ENCODE measurements at regions of chr14 and their contacts with region 1.

Region 1: GRCh38 chr14:34322940-34323418 is 139.1 kb downstream of the SPTSSA start:
- DNase-seq: no peak
- H3K4me3 ChIP-seq: no peak overlapping the region
- CTCF ChIP-seq: peak; percentile 79

Region 2: DNA sequence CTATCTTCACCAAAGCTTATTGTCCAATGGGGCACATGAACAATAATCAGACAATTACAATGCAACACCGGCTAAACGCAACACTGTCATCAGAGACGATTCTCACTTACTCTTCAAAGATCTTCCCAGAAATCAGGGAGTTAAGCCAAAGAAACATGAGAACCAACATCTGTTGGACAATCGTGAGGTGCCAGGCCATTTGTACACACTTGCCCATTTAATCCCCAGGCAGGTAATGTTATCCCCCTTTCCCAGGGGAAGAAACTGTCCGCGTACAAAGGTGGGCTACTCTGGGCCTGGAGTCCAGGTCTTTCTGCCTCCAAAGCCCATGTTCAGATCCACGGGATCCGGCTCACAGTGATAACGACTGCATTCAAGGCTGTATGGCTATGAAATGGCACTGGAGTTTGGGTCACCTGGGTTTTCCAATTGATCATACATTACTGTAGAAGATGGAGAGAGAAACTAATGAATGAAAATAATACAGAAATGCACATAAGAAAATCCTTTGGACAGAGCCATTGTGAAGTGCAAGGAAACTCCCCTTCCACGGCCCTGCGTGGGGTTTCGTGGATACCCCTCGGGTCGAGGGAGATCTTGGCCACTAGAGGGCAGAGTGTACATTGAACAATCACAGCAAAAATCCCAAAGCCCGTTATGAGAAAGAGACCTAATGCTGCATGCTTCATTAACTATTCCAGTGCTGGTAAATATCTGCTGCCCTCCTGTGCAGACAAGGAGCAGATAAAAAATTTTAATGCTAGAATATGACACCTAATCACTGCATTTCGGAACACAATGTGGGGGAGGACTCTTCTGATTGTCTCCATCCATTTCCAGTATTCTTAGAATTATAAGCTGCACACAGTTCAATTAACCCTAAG is 483.5 kb before region 1 on chr14:
- CTCF ChIA-PET with region 1: interaction called, 10 read pairs
- POLR2A ChIA-PET with region 1: no interaction called
- DNase-seq: no peak
- H3K4me3 ChIP-seq: no peak overlapping the region
- CTCF ChIP-seq: peak; percentile 70

Region 3: GRCh38 chr14:34030864-34031263 is 292.1 kb before region 1 on chr14:
- CTCF ChIA-PET with region 1: no interaction called
- POLR2A ChIA-PET with region 1: no interaction called
- DNase-seq: no peak
- H3K4me3 ChIP-seq: no peak overlapping the region
- CTCF ChIP-seq: no peak

Region 4: DNA sequence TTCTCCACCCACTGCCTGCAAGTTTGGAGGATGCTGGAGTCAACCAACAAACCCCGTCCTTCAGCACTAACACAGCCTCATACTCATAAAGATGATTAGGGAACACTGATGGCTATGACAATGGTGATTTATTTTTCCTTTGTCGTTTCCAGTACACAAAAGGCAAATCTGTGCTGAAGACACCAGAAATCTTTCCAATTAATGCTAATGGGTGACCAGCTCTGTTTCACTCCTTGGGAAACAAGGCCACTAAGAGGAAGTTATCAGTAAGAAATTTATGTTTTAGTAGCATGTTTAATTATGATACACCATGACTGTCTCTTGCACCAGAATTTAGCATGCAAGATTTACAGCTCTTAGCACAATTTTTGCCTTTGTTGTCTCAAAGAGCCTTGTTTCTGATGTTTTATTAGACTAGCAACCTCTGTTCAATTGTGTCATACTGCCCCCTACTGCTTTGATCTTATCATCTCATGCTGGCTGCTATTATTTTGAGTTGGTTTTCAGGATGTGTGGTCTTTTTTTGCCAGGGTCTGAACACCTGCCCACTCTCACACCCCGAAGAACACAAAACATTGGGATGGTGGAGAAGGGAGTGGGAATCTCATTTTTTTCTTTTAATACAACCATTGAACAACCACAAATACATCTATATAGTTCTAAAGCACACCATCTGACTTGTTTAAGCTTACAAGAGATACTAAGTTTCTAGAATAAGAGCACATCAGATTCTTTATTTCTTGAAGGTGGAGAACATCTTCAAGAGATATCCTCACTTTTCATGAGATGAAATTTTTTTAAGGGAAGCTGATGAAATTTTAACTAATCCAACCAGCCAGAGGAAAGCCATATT is 21.9 kb before region 1 on chr14:
- CTCF ChIA-PET with region 1: interaction called, 48 read pairs
- POLR2A ChIA-PET with region 1: no interaction called
- DNase-seq: no peak
- H3K4me3 ChIP-seq: no peak overlapping the region
- CTCF ChIP-seq: peak; percentile 32

Region 5: GRCh38 chr14:34338056-34338455 is 15.1 kb after region 1 on chr14:
- CTCF ChIA-PET with region 1: interaction called, 29 read pairs
- POLR2A ChIA-PET with region 1: no interaction called
- DNase-seq: no peak
- H3K4me3 ChIP-seq: no peak overlapping the region
- CTCF ChIP-seq: no peak

Region 6: DNA sequence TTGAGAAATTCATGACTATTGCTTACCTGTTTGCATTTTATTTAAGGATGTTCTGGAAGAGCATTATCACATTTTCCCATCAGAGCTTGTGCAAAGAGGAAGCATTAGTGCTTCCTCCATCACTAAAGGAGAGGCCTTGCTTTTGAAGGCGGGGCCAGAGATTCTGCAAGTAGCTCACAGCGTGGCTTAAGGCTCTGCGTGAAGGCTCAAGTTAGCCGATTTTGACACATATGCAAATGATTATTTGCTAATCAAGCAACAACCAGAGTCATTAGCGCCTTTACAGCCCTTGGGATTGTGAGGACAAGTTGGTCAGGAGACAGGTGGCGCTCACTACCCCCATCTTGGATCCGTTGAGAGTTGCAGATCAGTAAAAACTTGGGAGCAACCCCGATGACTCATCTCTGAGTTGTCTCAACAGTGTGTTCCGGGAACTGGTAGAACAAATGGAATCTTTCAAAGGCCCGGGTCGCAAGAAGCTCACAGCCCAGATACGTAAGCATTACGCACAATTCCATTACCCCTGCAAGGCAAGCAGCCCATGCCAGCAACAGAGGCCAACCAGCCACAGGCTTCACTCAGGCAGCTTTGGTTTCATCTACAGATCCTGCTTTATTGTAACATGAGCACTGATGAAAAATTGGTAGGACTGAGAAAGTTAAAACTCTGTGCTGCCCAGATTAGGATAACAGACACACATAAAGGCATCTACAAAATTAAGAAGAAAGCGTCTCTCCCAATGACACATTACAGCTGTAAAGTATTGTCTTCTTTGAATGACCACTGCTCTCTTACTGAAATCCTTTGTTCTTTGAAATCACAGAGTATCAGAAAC is 173.9 kb after region 1 on chr14:
- CTCF ChIA-PET with region 1: interaction called, 16 read pairs
- POLR2A ChIA-PET with region 1: no interaction called
- DNase-seq: peak; percentile 96
- H3K4me3 ChIP-seq: no peak overlapping the region
- CTCF ChIP-seq: peak; percentile 13

Region 7: DNA sequence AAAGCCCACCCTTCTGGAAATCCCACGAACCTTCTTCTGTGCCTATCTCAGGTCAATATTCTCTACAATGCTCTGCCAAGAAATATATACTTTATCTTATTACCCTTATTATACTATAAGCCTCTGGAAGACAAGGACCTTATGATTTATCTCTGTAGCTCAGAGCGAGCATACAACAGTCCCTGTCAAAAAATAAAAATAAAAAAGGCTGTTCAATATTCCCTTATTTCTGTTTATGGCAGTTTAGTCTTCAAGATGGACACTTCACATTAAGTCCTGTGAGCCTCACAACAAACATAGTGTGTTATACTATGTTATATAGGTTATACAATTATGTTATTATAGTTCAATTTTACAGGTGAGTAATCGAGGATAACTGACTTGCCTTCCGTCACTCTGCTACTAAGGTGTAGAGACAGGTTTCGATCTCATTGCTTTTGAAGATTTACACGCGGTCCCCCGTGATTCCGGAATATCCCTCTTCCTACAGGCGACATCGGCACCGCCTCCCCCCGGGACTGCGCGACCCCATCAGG is 216.0 kb after region 1 on chr14:
- CTCF ChIA-PET with region 1: interaction called, 12 read pairs
- POLR2A ChIA-PET with region 1: no interaction called
- DNase-seq: no peak
- H3K4me3 ChIP-seq: peak overlapping the region; percentile 98
- CTCF ChIP-seq: no peak